Activated CD4-positive, alpha-beta memory T cell treated with anti-CD3 and anti-CD28 coated beads, Interleukin-2, amount 10 ng/mL, durations not matched to agents 7 days and 5 days (primary cell): ENCODE measurements at regions of chr21 and their contacts with region 1.

Region 1: GRCh38 chr21:43789276-43790009 is at the start of gene RRP1:
- DNase-seq: peak; percentile 94
- H3K4me3 Mint-ChIP-seq: peak within 1 kb of the TSS; percentile 91
- H3K27ac Mint-ChIP-seq: peak within 1 kb of the TSS; percentile 80
- H3K4me1 Mint-ChIP-seq: peaks cover 24% of the 10 kb centered on the region
- H3K27me3 Mint-ChIP-seq: no peaks in the 10 kb centered on the region
- total RNA-seq, gene RRP1: 22.4 to 22.6 TPM

Region 2: DNA sequence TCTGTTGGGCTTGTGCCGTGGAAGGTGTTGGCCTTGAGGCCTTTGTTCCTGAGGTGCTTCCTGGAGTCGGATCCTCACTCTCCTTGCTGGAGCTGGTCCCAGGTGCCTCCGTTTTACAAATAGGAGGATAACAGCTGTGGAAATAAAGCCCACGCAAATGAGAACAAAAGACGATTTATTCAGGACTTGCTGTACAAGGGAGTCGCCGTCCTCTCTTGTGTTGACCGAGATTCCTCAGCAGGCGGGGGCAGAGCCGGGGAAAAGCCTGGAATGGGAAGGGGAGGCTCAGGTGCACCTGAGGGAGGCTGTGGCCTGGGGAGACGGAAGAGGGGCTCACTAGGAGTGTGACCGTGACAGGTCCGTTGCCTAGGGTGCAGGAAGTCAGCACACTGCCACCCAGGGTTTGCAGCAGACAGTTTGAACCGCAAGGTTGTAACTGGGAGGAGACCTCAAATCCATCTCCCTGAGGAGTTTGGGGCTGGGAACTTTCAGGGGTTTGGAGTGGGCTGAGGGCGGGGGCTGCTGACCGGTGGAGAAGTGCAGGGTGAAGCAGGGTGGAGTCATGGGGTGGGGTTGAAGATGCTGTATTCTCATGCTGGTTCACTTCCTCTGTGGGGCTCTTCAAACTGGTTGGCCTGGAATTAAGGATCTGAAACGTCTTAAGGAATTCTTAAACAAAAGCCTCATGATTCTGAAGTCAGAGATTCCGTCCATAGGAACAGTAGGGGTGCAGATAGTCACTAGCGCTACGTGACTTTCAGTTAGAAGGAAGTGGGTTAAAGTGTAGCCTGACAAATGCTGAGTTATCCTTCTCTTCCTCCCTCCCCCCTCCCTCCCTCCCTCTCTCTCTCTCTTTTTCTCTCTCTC is 10.7 kb before region 1 on chr21:
- CTCF ChIA-PET with region 1: interaction called, 9 read pairs
- POLR2A ChIA-PET with region 1: interaction called, 24 read pairs
- DNase-seq: peak; percentile 48
- H3K4me3 Mint-ChIP-seq: peak overlapping the region; percentile 69
- H3K27ac Mint-ChIP-seq: peak overlapping the region; percentile 91
- H3K4me1 Mint-ChIP-seq: peaks cover 67% of the 10 kb centered on the region
- H3K27me3 Mint-ChIP-seq: no peaks in the 10 kb centered on the region